ENCODE measurements at regions of chr20 and their contacts with region 1.

Region 1: GRCh38 chr20:1503564-1504227 is 12.5 kb upstream of the SIRPB2 start:
- DNase-seq: peak; percentile 86
- ATAC-seq: peak; percentile 99
- H3K4me3 Mint-ChIP-seq: no peak overlapping the region
- H3K27ac Mint-ChIP-seq: no peak overlapping the region
- H3K4me1 Mint-ChIP-seq: peaks cover 4% of the 10 kb centered on the region
- H3K27me3 Mint-ChIP-seq: peaks cover 75% of the 10 kb centered on the region

Region 2: DNA sequence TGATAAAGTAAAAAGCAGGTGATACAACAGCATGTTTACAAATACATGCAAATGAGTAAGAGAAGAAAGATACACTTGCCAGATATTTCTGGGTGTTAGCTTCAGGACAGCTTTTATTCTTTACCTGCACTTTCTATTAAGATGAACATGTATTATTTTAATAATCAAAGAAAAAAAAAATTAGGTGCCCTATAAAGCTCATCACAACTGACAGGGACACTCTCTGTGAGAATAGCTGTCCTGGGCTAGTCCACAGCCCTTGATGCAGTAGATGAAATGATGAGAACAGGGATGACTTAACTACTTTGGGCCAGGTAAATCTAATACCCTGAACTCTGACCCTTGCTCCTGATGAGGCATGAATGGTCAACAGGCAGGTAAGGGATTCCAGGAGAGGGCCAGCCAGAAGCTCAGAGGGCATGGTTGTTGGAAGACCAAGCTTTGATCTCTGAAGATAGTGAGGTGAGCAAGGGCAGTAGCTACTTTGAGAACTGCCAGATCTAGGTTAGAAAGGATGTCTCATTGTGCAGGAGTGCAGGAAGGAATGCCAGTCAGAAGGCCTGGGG is 52.7 kb before region 1 on chr20:
- CTCF ChIA-PET with region 1: interaction called, 12 read pairs
- DNase-seq: peak; percentile 27
- ATAC-seq: no peak
- H3K4me3 Mint-ChIP-seq: no peak overlapping the region
- H3K27ac Mint-ChIP-seq: no peak overlapping the region
- H3K4me1 Mint-ChIP-seq: no peaks in the 10 kb centered on the region
- H3K27me3 Mint-ChIP-seq: no peaks in the 10 kb centered on the region

Region 3: DNA sequence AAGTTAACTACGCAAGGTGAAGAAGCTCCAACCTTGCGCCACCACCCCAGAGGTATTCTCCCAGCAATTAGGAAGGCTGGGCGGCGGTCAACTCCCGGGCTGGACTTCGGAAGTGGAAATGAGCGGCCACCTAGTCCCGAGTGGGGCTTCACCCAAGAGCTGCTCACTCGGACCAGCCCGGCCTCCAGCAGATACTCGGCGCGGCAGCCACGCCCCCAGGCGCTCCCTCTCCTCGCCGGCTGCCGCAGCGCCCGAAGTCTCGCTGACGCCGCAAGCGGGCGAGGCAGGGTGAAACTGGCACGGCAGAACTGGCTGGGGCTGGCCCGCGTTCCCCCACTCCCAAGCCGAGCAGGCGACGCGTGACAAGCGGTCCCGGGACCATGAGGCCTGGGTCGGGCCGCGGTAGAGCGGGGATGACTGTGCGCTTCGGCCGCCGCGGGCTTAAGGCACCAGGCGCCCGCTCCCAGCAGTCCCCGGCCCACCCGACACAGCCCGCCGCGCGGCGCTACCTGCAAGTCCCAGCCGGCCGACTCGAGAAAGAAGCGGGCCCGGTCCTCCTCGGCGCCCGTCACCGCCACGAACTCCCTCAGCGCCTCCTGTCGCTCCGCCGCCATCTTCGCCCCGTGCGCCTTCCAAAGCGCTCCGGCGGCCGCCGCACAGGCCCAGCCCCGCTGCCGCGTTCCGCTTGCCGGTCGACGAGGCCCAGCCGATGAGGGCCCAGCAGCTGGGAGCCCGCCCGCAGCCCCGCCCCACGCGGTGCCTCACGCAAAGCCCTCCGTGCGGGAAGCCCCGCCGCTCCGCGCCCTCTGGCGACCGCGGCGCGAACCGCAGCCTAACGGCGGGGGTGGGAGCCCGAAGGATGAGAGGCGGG is 37.2 kb before region 1 on chr20 and contains the start of gene NSFL1C:
- CTCF ChIA-PET with region 1: interaction called, 21 read pairs
- DNase-seq: peak; percentile 97
- ATAC-seq: peak; percentile 98
- H3K4me3 Mint-ChIP-seq: peak within 1 kb of the TSS; percentile 79
- H3K27ac Mint-ChIP-seq: peak within 1 kb of the TSS; percentile 78
- H3K4me1 Mint-ChIP-seq: peaks cover 39% of the 10 kb centered on the region
- H3K27me3 Mint-ChIP-seq: peaks cover 16% of the 10 kb centered on the region
- total RNA-seq, gene NSFL1C: 55.6 to 65.0 TPM

Region 4: DNA sequence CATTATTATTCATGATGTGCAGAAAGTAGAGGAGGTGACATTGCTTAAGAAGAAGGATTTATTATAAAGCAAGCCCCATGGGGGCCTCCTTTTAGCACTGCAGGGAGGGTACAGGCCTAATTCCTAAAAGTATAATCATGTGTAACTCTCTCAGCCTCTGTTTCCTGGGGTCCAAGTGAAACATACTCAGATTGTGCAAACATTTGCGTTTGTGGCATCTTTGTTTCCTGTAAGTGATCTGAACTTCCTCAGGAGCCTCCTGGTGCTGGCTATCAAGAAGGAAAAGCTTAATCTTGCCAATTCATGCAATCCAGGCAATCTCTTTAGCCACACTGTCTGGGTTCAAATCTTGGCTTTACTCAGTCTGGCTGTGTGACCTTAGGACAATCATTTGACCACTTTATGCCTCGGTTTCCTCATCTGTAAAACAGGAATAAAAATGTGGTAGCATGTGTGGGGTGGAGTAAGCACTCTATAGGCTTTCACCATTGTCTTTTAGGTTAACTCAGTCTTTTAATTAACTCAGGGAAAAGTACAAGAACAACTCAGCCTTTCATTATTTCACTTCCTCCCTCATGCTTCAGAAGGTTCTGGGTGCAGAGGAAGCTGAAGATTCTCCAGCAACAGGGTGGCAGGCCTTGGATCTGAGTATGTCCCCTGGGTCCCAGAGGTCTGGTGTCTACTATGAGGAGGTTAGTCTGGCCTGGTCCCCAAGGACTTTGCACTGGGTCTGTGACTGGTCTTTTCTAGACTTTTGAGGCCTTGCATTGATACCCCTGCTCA is 11.6 kb before region 1 on chr20:
- CTCF ChIA-PET with region 1: interaction called, 11 read pairs
- DNase-seq: no peak
- ATAC-seq: no peak
- H3K4me3 Mint-ChIP-seq: no peak overlapping the region
- H3K27ac Mint-ChIP-seq: no peak overlapping the region
- H3K4me1 Mint-ChIP-seq: peaks cover 6% of the 10 kb centered on the region
- H3K27me3 Mint-ChIP-seq: peaks cover 68% of the 10 kb centered on the region

Region 5: DNA sequence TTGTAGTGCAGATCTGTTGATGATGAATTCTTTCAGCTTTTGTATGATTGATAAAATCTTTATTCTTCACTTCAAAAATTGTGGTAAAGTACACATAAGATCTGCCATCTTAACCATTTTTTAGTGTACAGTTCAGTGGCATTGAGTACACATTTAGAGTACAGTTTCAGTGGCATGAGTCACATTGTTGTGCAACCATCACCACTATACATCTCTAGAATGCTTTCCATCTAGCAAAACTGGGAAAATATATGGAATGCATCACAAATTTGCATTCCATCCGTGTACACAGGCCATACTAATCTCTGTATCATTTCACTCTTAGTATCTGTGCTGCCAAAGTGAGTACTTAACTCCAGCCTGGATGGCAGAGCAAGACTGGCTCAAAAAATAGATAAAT is 25.1 kb after region 1 on chr20:
- CTCF ChIA-PET with region 1: interaction called, 10 read pairs
- DNase-seq: no peak
- ATAC-seq: no peak
- H3K4me3 Mint-ChIP-seq: no peak overlapping the region
- H3K27ac Mint-ChIP-seq: no peak overlapping the region
- H3K4me1 Mint-ChIP-seq: no peaks in the 10 kb centered on the region
- H3K27me3 Mint-ChIP-seq: peaks cover 32% of the 10 kb centered on the region

Region 6: DNA sequence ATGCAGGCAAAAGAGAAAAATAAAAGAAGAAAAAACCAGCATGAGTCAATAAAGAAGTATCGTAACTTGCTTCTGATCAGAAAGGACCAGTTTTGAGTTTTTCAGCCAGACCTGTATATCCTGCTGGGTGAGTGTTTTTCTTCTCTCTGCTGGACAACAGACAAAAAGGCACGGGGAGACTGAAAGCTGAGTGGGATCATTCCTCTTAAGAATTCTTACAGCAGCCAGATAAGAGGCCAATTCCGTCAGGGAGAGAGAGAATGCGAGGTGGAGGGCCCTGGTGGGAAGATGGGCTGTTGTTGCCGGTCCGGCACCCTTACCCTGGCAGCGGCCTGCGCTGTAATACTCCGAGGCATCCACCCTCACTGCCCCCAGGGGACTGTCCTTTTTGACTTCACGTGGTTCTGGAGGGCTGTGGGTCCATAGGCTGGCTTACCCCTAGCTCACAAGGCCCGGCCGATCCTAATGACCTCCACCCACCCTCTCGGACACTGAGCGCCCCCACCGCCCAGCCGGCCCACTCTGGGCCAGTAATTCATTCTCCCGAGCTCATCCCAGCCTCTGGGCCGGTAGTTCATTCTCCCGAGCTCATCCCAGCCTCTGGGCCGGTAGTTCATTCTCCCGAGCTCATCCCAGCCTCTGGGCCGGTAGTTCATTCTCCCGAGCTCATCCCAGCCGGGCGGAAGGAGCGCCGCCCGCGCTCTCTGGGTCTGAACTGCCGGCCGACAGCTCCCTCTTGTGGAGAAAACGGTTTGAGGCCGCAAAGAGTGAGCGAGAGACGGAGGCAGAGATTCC is 273.2 kb after region 1 on chr20:
- CTCF ChIA-PET with region 1: interaction called, 41 read pairs
- DNase-seq: peak; percentile 84
- ATAC-seq: peak; percentile 93
- H3K4me3 Mint-ChIP-seq: peak overlapping the region; percentile 64
- H3K27ac Mint-ChIP-seq: no peak overlapping the region
- H3K4me1 Mint-ChIP-seq: peaks cover 10% of the 10 kb centered on the region
- H3K27me3 Mint-ChIP-seq: peaks cover 14% of the 10 kb centered on the region

Measured in activated CD8-positive, alpha-beta memory T cell treated with anti-CD3 and anti-CD28 coated beads, Interleukin-2, amount 10 ng/mL, durations not matched to agents 7 days and 5 days (primary cell).